ENCODE measurements at regions of chr2 and their contacts with region 1.

Region 1: DNA sequence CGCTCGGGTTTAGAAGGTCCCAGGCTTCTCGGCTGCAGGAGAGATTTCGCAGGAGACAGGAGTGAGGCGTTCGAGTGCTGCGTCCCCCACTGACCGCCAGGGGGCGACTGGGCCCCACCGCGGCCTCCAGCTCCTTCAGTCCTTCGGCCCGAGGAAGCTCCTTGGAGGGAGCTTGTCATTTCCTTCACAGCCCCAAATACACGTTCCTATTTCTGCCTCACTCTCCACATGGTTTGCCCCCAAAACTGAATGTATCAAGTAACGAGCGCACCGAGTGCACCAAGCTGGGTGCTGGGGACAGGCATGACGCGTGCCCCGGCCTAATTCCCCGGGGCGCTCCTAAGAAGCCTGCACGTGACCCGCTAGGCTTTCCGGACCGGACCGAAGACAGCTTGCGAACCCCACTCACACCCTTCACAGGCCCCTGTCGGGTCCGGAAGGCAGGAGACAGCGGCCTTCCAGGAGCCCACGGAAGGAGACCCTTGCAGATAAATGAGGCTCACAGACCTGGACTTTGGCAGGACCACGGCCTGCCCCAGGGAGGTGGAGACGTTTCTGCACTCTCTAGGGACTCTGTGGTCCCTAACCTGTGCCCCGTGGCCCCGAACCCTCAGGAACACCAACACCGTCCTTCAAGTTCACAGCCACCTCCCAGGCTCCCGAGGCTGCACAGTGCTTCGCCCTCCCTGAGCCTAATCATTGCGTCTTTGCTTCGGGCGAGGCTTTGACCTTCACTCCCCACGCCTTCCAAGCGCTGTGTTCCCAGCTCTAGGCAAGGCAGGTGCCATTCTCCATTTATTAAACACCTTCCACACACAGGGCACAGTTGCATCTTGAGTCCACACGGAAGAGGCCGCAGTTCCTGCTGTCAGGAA is 13.0 kb upstream of the FAHD2A start:
- DNase-seq: peak; percentile 85
- CTCF ChIP-seq: peak; percentile 87

Region 2: DNA sequence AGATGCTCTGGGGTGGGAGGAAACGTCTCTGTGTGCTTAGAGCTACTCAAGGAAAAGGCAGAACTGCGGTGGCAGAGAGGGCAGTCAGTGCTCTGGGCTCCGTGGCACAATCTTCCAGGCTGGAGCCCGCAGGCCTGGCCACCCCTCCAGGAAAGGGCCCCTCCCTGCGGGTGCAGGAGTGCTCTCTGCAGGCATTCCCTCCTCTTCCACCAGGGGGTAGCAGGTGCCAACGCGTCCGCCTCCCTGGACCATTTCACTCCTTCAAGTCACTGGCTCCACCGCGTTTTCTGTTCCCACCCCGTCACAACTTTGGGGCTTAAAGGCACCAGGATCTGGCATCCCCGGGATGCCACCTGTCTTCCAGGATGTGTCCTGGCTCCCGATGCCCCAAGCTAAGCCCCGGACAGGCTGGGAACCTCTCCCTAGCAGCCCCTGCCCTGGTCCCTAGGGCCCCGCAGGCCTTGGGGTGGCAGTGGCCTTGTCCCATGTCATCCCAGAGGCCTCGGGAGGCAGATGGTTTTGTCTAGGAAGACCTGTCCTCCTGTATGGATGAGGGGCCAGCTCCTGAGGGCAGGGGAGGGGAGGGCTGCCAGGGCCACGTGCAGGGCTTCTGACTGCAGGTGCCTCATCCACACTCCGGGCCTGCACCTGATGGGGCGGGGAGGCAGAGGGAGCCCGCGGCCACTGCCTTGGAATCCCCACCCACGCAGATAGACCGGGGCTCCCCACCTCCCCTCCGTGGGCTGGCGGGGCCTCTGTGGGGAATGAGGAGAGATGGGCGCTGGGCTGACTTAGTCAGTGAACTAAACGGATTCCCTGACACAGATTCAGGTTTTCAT is 65.9 kb before region 1 on chr2:
- CTCF ChIA-PET with region 1: no interaction called
- POLR2A ChIA-PET with region 1: no interaction called
- DNase-seq: no peak
- CTCF ChIP-seq: peak; percentile 13

Region 3: GRCh38 chr2:95379371-95379831 is 10.1 kb before region 1 on chr2:
- CTCF ChIA-PET with region 1: interaction called, 12 read pairs
- POLR2A ChIA-PET with region 1: no interaction called
- DNase-seq: no peak
- CTCF ChIP-seq: no peak

Region 4: GRCh38 chr2:95402370-95403203 is 13.1 kb after region 1 on chr2 and contains the start of gene FAHD2A:
- CTCF ChIA-PET with region 1: interaction called, 47 read pairs
- POLR2A ChIA-PET with region 1: no interaction called
- DNase-seq: peak; percentile 99
- CTCF ChIP-seq: no peak